ENCODE measurements at regions of chr17 and their contacts with region 1.

Region 1: GRCh38 chr17:82065638-82066303 is at the start of gene DUS1L:
- DNase-seq: peak; percentile 79
- ATAC-seq: peak; percentile 89
- H3K4me3 Mint-ChIP-seq: peak within 1 kb of the TSS; percentile 84
- H3K27ac Mint-ChIP-seq: peak within 1 kb of the TSS; percentile 78
- H3K4me1 Mint-ChIP-seq: peaks cover 15% of the 10 kb centered on the region
- H3K27me3 Mint-ChIP-seq: no peaks in the 10 kb centered on the region
- CTCF ChIP-seq: no peak
- total RNA-seq, gene DUS1L: 127 and 134 TPM in 2 replicates

Region 2: GRCh38 chr17:81386649-81387099 is 679.1 kb before region 1 on chr17:
- CTCF ChIA-PET with region 1: no interaction called
- POLR2A ChIA-PET with region 1: no interaction called
- intact Hi-C with region 1: no loop called
- DNase-seq: no peak
- ATAC-seq: peak; percentile 68
- H3K4me3 Mint-ChIP-seq: no peak overlapping the region
- H3K27ac Mint-ChIP-seq: no peak overlapping the region
- H3K4me1 Mint-ChIP-seq: no peaks in the 10 kb centered on the region
- H3K27me3 Mint-ChIP-seq: peaks cover 41% of the 10 kb centered on the region
- CTCF ChIP-seq: no peak

Region 3: GRCh38 chr17:82051776-82052637 is 13.8 kb before region 1 on chr17 and contains the starts of genes GPS1 and RFNG:
- CTCF ChIA-PET with region 1: no interaction called
- POLR2A ChIA-PET with region 1: interaction called, 7 read pairs
- intact Hi-C with region 1: loop called (anchors 1 kb)
- DNase-seq: peak; percentile 84
- ATAC-seq: peak; percentile 91
- H3K4me3 Mint-ChIP-seq: peak within 1 kb of the TSS; percentile 84
- H3K27ac Mint-ChIP-seq: peak within 1 kb of the TSS; percentile 78
- H3K4me1 Mint-ChIP-seq: peaks cover 17% of the 10 kb centered on the region
- H3K27me3 Mint-ChIP-seq: no peaks in the 10 kb centered on the region
- CTCF ChIP-seq: no peak
- total RNA-seq, gene GPS1: 88.7 and 94.7 TPM in 2 replicates
- total RNA-seq, gene RFNG: 17.7 and 18.7 TPM in 2 replicates